ENCODE measurements at regions of chr18 and their contacts with region 1.

Region 1: DNA sequence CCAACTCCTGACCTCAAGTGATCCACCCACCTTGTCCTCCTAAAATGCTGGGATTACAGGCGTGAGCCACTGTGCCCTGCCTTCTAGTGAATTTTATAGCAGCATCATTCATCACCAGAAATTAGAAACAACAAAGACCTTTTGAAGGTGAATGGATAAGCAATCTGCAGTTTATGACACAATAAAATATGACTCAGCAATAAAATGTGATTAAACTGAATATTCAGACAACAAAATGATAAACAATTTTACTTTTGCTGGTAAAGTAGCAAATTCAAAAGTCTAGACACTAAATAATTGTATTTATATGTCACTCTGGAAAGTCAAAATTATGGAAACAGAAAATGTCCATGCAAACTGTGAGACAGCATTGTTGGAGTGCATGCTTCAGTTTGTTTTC is 656.6 kb downstream of the CBLN2 start:
- DNase-seq: no peak
- H3K4me3 ChIP-seq: no peak overlapping the region
- H3K27ac ChIP-seq: no peak overlapping the region
- H3K4me1 ChIP-seq: no peaks in the 10 kb centered on the region
- H3K27me3 ChIP-seq: no peaks in the 10 kb centered on the region
- CTCF ChIP-seq: no peak

Region 2: DNA sequence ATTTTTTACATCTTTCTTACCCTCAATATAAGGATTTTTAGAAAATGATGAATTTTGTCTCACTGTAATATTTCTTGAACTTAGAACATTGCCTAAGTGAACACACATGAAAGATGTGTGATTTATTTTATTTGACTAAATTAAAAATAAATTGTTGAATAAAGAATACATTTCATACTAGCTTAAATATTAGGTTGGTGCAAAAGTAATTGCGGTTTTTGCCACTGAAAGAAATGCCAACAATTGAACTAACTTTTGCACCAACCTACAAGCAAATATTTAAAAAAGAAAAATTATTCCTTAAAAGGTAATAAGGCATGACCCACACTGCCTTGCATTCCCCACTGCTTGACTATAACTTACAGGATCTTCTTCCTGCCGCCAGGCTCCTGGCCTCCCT is 60.7 kb before region 1 on chr18:
- intact Hi-C with region 1: loop called (anchors 10 kb)
- DNase-seq: no peak
- H3K4me3 ChIP-seq: no peak overlapping the region
- H3K27ac ChIP-seq: no peak overlapping the region
- H3K4me1 ChIP-seq: no peaks in the 10 kb centered on the region
- H3K27me3 ChIP-seq: no peaks in the 10 kb centered on the region
- CTCF ChIP-seq: no peak

Region 3: DNA sequence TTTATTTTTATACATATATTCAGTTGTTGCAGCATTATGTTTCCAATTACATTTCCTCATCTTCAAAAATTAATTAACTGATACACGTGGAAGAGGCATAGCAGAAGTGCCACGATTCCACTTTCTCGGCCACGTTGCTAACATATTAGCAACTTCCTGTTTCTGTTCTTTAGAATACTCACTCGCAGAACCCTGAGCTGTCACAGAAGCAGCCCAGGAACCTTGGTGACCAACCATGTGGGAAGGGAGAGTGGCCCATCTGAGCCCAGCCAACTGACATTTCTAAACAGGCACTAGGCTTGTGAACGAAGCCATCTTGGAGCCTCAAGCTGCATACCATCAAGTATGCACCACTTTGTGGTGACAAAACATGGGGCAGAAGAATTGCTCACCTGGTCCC is 306.6 kb after region 1 on chr18:
- intact Hi-C with region 1: no loop called
- DNase-seq: no peak
- H3K4me3 ChIP-seq: no peak overlapping the region
- H3K27ac ChIP-seq: no peak overlapping the region
- H3K4me1 ChIP-seq: no peaks in the 10 kb centered on the region
- H3K27me3 ChIP-seq: no peaks in the 10 kb centered on the region
- CTCF ChIP-seq: no peak

Measured in ascending aorta (tissue), 2 donors.